ENCODE measurements at regions of chr11 and their contacts with region 1.

Region 1: DNA sequence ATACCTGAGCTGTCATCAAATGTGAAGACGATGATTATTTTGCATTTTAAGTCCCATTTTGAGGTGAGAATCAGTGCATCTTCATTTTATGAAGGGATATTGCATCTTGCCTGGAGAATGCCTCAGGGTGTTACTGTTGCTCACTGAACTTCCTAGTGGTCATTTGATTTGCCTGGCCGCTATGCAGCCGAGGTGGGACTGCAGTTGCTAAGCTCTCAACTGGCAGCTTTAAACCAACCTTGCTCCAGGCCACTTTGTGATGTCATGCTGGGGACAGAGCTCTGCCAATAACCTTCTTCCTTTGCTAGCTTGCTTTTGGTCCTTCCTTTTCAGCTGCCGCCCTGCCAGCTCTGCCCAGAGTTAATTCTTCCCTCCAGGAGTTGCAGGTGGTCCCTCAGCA is 409.4 kb upstream of the B3GAT1 start:
- DNase-seq: no peak
- ATAC-seq: no peak
- H3K4me3 ChIP-seq: no peak overlapping the region
- H3K27ac ChIP-seq: no peak overlapping the region
- H3K4me1 ChIP-seq: no peaks in the 10 kb centered on the region
- H3K27me3 ChIP-seq: peaks cover 15% of the 10 kb centered on the region
- CTCF ChIP-seq: no peak

Region 2: DNA sequence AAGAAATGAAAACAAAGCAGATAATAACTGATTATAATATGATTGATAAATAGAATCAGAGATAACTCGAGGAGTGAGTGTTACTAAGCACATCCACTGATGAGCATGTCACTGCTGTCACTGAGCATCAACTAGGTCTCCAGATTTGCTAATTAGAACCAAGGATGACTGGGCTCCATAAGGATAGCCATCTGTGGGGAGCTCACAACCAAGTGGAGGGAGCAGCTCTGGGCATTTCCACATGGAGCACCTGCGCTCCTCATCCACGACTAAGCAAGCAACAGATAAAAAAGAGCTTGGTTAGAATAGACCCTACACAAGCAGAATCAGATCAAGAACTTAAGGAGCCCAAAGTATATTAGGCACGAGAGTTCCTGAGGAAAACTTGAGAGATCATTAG is 13.4 kb before region 1 on chr11:
- CTCF ChIA-PET with region 1: no interaction called
- POLR2A ChIA-PET with region 1: interaction called, 14 read pairs
- in situ Hi-C with region 1: no loop called
- intact Hi-C with region 1: no loop called
- DNase-seq: no peak
- ATAC-seq: no peak
- H3K4me3 ChIP-seq: no peak overlapping the region
- H3K27ac ChIP-seq: no peak overlapping the region
- H3K4me1 ChIP-seq: no peaks in the 10 kb centered on the region
- H3K27me3 ChIP-seq: peaks cover 17% of the 10 kb centered on the region
- CTCF ChIP-seq: no peak